ENCODE measurements at regions of chr5 and their contacts with region 1.

Region 1: GRCh38 chr5:178626484-178627258 is at the start of gene CLK4:
- DNase-seq: peak; percentile 94 to 98 (median 97)
- ATAC-seq: peak; percentile 86
- H3K4me3 ChIP-seq: peak within 1 kb of the TSS; percentile 84 to 94
- H3K4me3 Mint-ChIP-seq: peak within 1 kb of the TSS; percentile 99
- H3K27ac ChIP-seq: peak within 1 kb of the TSS; percentile 91 to 97
- H3K27ac Mint-ChIP-seq: peak within 1 kb of the TSS; percentile 100
- H3K4me1 ChIP-seq: peaks cover 34% of the 10 kb centered on the region
- H3K4me1 Mint-ChIP-seq: peaks cover 38% of the 10 kb centered on the region
- H3K27me3 ChIP-seq: no peaks in the 10 kb centered on the region
- H3K27me3 Mint-ChIP-seq: no peaks in the 10 kb centered on the region
- CTCF ChIP-seq: no peak
- total RNA-seq, gene CLK4: 104 to 106 TPM

Region 2: DNA sequence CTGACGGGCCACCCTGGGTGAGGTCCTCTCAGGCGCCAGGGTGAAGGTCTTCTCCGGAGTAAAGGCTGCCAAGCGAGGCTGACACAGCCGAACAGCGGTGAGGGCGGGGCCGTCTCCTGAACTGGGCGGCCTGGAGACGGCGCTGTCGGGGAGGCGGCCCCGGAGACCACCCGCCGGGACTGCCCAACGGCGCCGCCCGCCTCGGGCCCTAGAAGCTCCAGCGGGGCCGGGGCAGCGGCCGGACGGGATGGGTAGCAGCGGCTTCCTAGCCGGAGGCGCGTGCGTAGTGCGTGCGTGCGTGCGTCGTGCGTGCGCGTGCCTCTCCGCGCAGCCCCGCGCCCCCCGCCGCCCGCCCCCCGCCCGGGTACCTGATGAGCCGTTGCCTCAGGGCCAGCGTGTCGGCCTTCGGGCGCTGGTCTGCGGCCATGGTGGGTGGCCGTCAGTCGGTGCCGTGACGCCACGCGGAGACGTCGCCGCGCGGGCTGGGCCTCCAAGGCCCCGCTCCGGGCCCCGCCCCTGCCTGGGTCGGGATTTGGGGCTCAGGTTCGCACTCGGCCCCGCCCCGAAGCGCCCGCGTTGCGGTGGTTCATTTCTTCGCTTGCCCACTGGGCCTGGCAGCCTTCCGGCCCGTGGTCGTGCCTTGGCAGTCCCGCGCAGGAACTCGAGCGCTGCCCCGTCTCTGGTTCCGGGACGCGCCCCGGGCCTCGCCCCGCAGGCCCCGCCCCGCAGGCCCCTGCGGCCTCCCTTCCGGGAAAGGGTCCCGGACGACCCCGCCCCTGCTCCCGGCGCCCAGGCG is 394.3 kb before region 1 on chr5 and contains the start of gene PHYKPL:
- CTCF ChIA-PET with region 1: interaction called, 4 read pairs
- POLR2A ChIA-PET with region 1: no interaction called
- intact Hi-C with region 1: loop called (anchors 2 to 10 kb)
- DNase-seq: peak; percentile 33 to 83 (median 65)
- ATAC-seq: peak; percentile 65
- H3K4me3 ChIP-seq: peak within 1 kb of the TSS; percentile 87 to 89
- H3K4me3 Mint-ChIP-seq: peak within 1 kb of the TSS; percentile 81
- H3K27ac ChIP-seq: peak within 1 kb of the TSS; percentile 76 to 78
- H3K27ac Mint-ChIP-seq: peak within 1 kb of the TSS; percentile 87
- H3K4me1 ChIP-seq: peaks cover 61% of the 10 kb centered on the region
- H3K4me1 Mint-ChIP-seq: peaks cover 76% of the 10 kb centered on the region
- H3K27me3 ChIP-seq: no peaks in the 10 kb centered on the region
- H3K27me3 Mint-ChIP-seq: no peaks in the 10 kb centered on the region
- CTCF ChIP-seq: no peak
- total RNA-seq, gene PHYKPL: 82.8 to 90.3 TPM

Region 3: DNA sequence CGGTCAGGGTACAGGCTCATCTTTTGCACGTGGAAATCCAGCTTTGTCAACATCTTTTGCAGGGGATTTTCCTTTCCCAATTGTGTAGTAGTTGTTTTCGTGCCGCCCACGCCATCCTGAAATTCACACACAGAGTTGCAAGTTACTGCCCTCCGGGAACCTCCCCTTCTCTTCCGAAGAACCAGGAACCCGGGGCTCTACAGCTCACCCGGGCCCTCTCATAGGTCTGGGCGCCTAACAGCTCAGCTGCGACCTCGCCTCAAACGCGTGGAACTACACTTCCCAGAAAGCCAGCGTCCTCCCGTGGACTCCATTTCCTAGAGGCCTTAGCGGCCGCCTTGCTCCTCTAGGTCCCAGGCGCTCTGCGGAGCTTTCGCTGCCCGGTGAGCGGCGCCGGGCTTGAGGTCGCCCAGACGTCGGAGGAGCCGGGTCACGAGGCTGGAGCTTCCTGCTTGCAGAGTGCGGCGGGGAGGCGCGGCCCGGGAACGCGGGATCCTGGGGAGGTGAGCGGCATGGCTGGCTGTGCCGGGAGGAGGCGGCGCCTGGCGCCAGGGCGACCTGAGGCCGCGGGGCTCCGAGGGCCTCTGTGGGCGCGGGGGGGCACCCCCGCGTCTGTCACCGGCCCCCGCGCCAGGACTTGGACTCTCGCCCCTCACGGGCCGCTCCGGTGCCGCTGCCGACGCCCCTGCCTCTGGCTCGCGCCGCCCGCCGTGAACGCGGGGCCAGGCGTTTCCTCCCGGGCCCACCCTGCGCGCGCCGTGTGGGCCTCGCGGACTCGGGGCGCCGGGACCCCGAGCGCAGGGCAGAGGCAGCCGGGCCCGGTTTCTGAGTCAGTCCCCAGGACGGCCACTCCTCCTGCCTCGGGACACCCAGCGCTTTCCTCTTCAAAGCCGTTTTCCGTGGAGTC is 233.2 kb after region 1 on chr5 and contains the start of gene ZNF354B:
- CTCF ChIA-PET with region 1: no interaction called
- POLR2A ChIA-PET with region 1: interaction called, 3 read pairs
- intact Hi-C with region 1: loop called (anchors 2 kb)
- DNase-seq: peak; percentile 54 to 93 (median 81)
- ATAC-seq: peak; percentile 96
- H3K4me3 ChIP-seq: peak within 1 kb of the TSS; percentile 60 to 95
- H3K4me3 Mint-ChIP-seq: peak within 1 kb of the TSS; percentile 90
- H3K27ac ChIP-seq: peak within 1 kb of the TSS; percentile 34 to 55
- H3K27ac Mint-ChIP-seq: peak within 1 kb of the TSS; percentile 90
- H3K4me1 ChIP-seq: peaks cover 15% of the 10 kb centered on the region
- H3K4me1 Mint-ChIP-seq: peaks cover 31% of the 10 kb centered on the region
- H3K27me3 ChIP-seq: no peaks in the 10 kb centered on the region
- H3K27me3 Mint-ChIP-seq: no peaks in the 10 kb centered on the region
- CTCF ChIP-seq: no peak
- total RNA-seq, gene ZNF354B: 4.6 to 6.1 TPM

Region 4: GRCh38 chr5:179550511-179551230 is 924.0 kb after region 1 on chr5 and contains the start of gene RUFY1:
- CTCF ChIA-PET with region 1: no interaction called
- POLR2A ChIA-PET with region 1: interaction called, 3 read pairs
- intact Hi-C with region 1: loop called in 1 of 2 experiments (anchors 2 kb)
- DNase-seq: peak; percentile 69 to 91 (median 82)
- ATAC-seq: peak; percentile 71
- H3K4me3 ChIP-seq: peak within 1 kb of the TSS; percentile 89 to 98
- H3K4me3 Mint-ChIP-seq: peak within 1 kb of the TSS; percentile 97
- H3K27ac ChIP-seq: peak within 1 kb of the TSS; percentile 76 to 80
- H3K27ac Mint-ChIP-seq: peak within 1 kb of the TSS; percentile 97
- H3K4me1 ChIP-seq: peaks cover 26% of the 10 kb centered on the region
- H3K4me1 Mint-ChIP-seq: peaks cover 42% of the 10 kb centered on the region
- H3K27me3 ChIP-seq: no peaks in the 10 kb centered on the region
- H3K27me3 Mint-ChIP-seq: no peaks in the 10 kb centered on the region
- CTCF ChIP-seq: no peak
- total RNA-seq, gene RUFY1: 19.6 to 19.8 TPM

Region 5: GRCh38 chr5:180291943-180292831 is 1665.5 kb after region 1 on chr5 and contains the start of gene MAPK9:
- CTCF ChIA-PET with region 1: no interaction called
- POLR2A ChIA-PET with region 1: no interaction called
- intact Hi-C with region 1: loop called in 1 of 2 experiments (anchors 10 kb)
- DNase-seq: peak; percentile 76 to 96 (median 83)
- ATAC-seq: peak; percentile 69
- H3K4me3 ChIP-seq: peak within 1 kb of the TSS; percentile 62 to 87
- H3K4me3 Mint-ChIP-seq: peak within 1 kb of the TSS; percentile 95
- H3K27ac ChIP-seq: peak within 1 kb of the TSS; percentile 88 to 93
- H3K27ac Mint-ChIP-seq: peak within 1 kb of the TSS; percentile 99
- H3K4me1 ChIP-seq: peaks cover 23% of the 10 kb centered on the region
- H3K4me1 Mint-ChIP-seq: peaks cover 56% of the 10 kb centered on the region
- H3K27me3 ChIP-seq: no peaks in the 10 kb centered on the region
- H3K27me3 Mint-ChIP-seq: no peaks in the 10 kb centered on the region
- CTCF ChIP-seq: no peak
- total RNA-seq, gene MAPK9: 23.3 to 24.9 TPM